ENCODE measurements at regions of chr2 and their contacts with region 1.

Region 1: GRCh38 chr2:31333527-31334183 is 80.9 kb downstream of the XDH start:
- DNase-seq: peak; percentile 71 to 76 (median 75)
- H3K4me3 ChIP-seq: no peak overlapping the region
- H3K4me3 Mint-ChIP-seq: no peak overlapping the region
- H3K27ac ChIP-seq: no peak overlapping the region
- H3K27ac Mint-ChIP-seq: peak overlapping the region in 2 of 7 donors; percentile 20 to 48
- H3K4me1 ChIP-seq: no peaks in the 10 kb centered on the region
- H3K4me1 Mint-ChIP-seq: no peaks in the 10 kb centered on the region
- H3K27me3 ChIP-seq: no peaks in the 10 kb centered on the region
- H3K27me3 Mint-ChIP-seq: peaks cover 1 to 3% of the 10 kb centered on the region in 2 donors

Region 2: DNA sequence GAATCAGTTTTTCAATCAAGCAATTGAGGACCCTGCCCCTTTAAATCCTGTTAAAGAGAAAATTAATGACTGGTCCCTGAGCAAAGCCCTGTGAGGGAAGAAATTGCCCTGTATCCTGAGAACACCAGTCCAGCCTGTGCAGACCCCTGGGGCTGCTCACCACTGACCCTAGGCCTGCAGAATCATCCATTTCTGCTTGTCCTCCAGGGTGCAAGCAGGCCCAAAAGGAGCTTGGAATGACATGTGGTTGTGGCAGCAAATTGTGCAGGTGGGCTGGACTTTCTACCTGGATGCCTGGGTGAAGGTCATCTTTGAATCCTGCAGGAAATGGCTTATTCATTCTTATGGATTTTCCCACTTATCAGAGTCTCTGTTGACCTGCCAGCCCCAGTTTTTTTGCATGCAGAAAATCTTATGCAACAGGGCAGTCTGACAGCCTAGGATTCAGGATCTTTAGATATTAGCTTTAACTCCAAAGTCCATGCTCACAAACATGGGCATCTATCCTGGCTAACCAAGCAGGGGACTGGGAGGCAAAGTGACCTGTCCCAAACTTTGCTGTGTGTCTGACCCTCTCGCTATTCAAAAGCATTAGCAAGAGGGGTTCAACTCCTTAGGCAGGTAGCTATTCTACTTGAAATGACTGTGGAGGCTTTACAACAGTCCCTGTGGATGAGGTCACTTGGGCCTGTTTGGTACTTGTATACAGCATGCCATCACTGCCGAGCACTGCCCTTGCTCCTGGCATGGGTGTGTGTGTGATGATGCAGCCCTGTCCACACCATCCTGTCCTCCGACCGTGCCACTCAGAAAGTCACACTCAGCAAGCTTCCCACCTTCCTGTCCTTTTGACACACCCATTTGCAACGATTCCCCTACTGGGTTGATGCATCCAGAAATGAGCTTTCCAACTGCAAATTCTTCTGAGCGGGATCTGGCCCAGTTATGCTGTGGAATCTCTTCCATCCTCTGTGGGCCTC is 611.7 kb before region 1 on chr2:
- CTCF ChIA-PET with region 1: interaction called, 249 read pairs
- POLR2A ChIA-PET with region 1: no interaction called
- intact Hi-C with region 1: no loop called
- DNase-seq: no peak
- H3K4me3 ChIP-seq: no peak overlapping the region
- H3K4me3 Mint-ChIP-seq: no peak overlapping the region
- H3K27ac ChIP-seq: no peak overlapping the region
- H3K27ac Mint-ChIP-seq: no peak overlapping the region
- H3K4me1 ChIP-seq: no peaks in the 10 kb centered on the region
- H3K4me1 Mint-ChIP-seq: no peaks in the 10 kb centered on the region
- H3K27me3 ChIP-seq: peaks cover 15% of the 10 kb centered on the region
- H3K27me3 Mint-ChIP-seq: peaks cover 4 to 21% of the 10 kb centered on the region in 2 donors

Region 3: DNA sequence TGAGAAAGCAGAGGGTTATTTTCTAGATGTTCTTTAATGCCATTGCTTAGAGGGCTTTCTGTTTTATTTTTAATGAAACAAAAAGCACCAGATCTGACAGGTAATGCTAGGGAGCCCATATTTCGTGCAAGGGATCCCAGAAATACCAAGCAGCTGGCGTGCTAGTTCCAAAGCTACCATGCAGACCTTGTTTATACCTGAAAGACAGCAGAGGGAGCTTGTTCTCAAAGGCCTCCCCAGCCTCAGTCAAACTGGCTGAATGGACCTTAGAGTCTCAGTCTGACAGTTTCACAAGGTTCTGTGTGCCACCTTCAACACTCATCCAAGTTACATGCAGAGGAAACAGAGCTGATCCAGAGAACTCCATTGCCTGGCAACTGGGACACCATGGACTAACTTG is 244.0 kb before region 1 on chr2:
- CTCF ChIA-PET with region 1: interaction called, 4 read pairs
- POLR2A ChIA-PET with region 1: no interaction called
- intact Hi-C with region 1: loop called (anchors 1 kb)
- DNase-seq: no peak
- H3K4me3 ChIP-seq: no peak overlapping the region
- H3K4me3 Mint-ChIP-seq: no peak overlapping the region
- H3K27ac ChIP-seq: no peak overlapping the region
- H3K27ac Mint-ChIP-seq: no peak overlapping the region
- H3K4me1 ChIP-seq: no peaks in the 10 kb centered on the region
- H3K4me1 Mint-ChIP-seq: no peaks in the 10 kb centered on the region
- H3K27me3 ChIP-seq: no peaks in the 10 kb centered on the region
- H3K27me3 Mint-ChIP-seq: peaks cover 8% of the 10 kb centered on the region in 2 donors

Region 4: DNA sequence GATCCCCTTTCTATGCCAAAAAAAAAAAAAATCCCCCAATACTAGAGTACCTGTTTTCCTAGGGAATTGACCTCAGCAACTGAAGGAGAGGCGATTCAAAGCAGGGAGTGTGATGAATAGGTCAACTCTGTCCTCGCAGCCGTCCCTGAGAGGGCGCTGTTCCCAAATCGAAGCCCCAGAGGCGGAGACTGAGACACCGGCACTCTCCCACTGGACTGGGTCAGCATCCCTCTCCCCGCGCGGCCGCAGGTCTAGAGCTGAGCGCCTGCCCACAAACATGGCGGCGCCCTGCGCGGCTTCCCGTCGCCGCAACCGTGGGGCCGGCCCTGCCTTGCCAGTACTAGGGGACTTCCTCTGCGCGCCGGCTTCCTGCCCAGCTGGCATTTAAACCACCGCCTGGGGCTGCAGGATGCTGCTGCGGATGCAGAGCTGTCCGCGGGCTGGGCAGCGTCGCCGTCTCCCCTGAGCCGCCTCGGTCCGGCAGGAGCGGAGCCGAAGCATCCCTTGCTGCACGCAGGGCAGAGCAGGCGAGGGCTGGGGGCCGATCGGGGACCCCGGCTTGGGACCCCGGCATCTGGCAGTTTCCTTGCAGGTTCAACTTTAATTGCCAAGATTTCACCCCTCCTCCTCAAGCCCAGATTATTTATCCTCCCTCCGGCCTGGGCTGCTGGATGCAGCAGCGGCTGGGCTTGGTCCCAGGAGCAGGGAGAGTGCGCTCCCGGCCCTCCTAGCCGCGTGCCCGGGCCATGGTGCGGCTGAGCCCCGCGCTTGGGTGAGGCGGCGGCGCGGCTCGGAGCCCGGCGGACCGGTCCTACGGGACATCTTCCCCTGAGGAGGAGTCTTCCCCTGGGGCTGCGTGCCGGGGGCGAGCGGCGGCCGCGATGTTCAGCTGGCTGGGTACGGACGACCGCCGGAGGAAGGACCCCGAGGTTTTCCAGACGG is 99.6 kb before region 1 on chr2 and contains the start of gene EHD3:
- CTCF ChIA-PET with region 1: interaction called, 5 read pairs
- POLR2A ChIA-PET with region 1: no interaction called
- intact Hi-C with region 1: loop called (anchors 1 kb)
- DNase-seq: peak; percentile 63 to 74 (median 70)
- H3K4me3 ChIP-seq: peak within 1 kb of the TSS; percentile 49 to 66
- H3K4me3 Mint-ChIP-seq: peak within 1 kb of the TSS; percentile 81 to 87 (median 83)
- H3K27ac ChIP-seq: peak within 1 kb of the TSS; percentile 23
- H3K27ac Mint-ChIP-seq: peak within 1 kb of the TSS in 6 of 7 donors; percentile 7 to 87 (median 77)
- H3K4me1 ChIP-seq: peaks cover 22% of the 10 kb centered on the region
- H3K4me1 Mint-ChIP-seq: peaks cover 17 to 36% (median 25%) of the 10 kb centered on the region in 4 donors
- H3K27me3 ChIP-seq: peaks cover 6% of the 10 kb centered on the region
- H3K27me3 Mint-ChIP-seq: peaks cover 0 to 1% of the 10 kb centered on the region in 2 donors
- total RNA-seq, gene EHD3: 4.0 to 4.4 TPM

Region 5: DNA sequence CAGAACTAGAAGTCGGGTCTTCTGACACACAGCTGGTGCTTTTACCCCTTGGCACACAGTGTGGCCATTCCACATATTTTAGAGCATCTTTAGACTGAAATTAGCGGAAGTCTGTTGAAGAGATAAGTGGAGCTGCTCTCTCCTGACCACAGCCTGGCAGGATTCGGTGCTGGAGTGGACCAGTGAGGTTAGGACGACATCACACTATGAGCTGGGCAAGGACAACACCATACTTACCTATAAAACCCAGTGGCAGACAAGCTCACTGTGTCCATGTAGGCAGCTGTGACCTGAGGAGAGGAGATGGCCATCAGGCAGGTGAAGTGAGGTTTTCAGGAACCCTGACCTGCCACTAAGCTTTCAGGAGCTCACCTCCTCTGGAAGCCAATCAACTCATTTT is 10.8 kb after region 1 on chr2:
- CTCF ChIA-PET with region 1: interaction called, 12 read pairs
- POLR2A ChIA-PET with region 1: no interaction called
- intact Hi-C with region 1: no loop called
- DNase-seq: no peak
- H3K4me3 ChIP-seq: no peak overlapping the region
- H3K4me3 Mint-ChIP-seq: no peak overlapping the region
- H3K27ac ChIP-seq: no peak overlapping the region
- H3K27ac Mint-ChIP-seq: no peak overlapping the region
- H3K4me1 ChIP-seq: no peaks in the 10 kb centered on the region
- H3K4me1 Mint-ChIP-seq: no peaks in the 10 kb centered on the region
- H3K27me3 ChIP-seq: no peaks in the 10 kb centered on the region
- H3K27me3 Mint-ChIP-seq: peaks cover 10 to 11% of the 10 kb centered on the region in 2 donors